ENCODE measurements at regions of chr9 and their contacts with region 1.

Region 1: DNA sequence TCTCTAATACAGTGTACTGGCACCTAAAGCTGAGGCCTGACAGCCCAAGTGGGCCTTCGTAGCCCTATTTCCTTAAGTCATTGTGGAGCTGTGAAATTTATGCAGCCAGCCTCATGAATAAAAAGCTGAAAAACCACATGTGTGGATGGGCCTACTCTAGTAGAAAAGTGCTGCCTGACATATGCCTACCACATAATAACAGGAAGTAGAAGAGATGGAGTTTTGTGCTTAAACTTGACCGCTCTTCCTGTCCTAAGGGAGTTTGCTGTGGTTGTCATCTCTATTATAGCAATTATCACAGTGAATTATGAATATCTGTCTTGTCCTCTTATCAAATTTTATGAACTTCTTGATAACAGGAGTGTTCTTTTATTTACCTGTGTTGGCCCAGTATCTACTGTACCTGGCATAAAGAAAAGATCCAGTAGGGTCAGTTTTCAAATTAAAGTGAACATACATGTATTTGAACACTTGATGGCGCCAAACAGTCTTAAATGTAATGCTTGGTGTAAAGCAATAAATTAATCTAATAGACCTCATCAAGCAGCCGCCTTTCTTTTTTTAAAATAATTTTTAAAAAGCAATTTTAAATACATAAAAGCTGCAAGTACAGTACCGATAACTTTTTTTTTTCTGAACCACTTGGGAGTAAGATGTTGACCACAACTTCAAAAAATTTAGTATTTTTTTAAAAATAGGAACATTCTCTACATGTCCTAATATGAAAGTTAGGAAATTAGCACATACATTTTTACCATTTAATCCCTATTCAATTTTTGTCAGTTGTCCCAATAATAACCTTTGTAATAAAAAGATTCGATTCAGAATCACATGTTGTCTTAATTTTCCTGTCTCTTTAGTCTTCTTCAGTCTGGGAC is 51.0 kb downstream of the FKTN start:
- DNase-seq: no peak
- ATAC-seq: peak; percentile 64

Region 2: GRCh38 chr9:105716146-105716545 is 107.2 kb after region 1 on chr9:
- intact Hi-C with region 1: loop called in 1 of 2 experiments (anchors 5 kb)
- DNase-seq: no peak
- ATAC-seq: no peak

Measured in left colon (tissue), 2 donors.